Activated CD8-positive, alpha-beta T cell treated with anti-CD3 and anti-CD28 coated beads, Interleukin-2, amount 10 ng/mL, durations not matched to agents 7 days and 5 days (primary cell): ENCODE measurements at regions of chr2 and their contacts with region 1.

Region 1: GRCh38 chr2:113390124-113390849 is 47.2 kb upstream of the ZNG1B start:
- DNase-seq: peak; percentile 73
- ATAC-seq: peak; percentile 90
- H3K4me3 Mint-ChIP-seq: peak overlapping the region; percentile 74
- H3K27ac Mint-ChIP-seq: peak overlapping the region; percentile 82
- H3K4me1 Mint-ChIP-seq: peaks cover 15% of the 10 kb centered on the region
- H3K27me3 Mint-ChIP-seq: peaks cover 20% of the 10 kb centered on the region

Region 2: GRCh38 chr2:113219889-113220641 is 170.2 kb before region 1 on chr2:
- CTCF ChIA-PET with region 1: interaction called, 11 read pairs
- POLR2A ChIA-PET with region 1: interaction called, 3 read pairs
- DNase-seq: no peak
- ATAC-seq: no peak
- H3K4me3 Mint-ChIP-seq: no peak overlapping the region
- H3K27ac Mint-ChIP-seq: no peak overlapping the region
- H3K4me1 Mint-ChIP-seq: peaks cover 33% of the 10 kb centered on the region
- H3K27me3 Mint-ChIP-seq: peaks cover 5% of the 10 kb centered on the region

Region 3: GRCh38 chr2:113284481-113284880 is 105.8 kb before region 1 on chr2:
- CTCF ChIA-PET with region 1: no interaction called
- POLR2A ChIA-PET with region 1: no interaction called
- DNase-seq: no peak
- ATAC-seq: no peak
- H3K4me3 Mint-ChIP-seq: no peak overlapping the region
- H3K27ac Mint-ChIP-seq: no peak overlapping the region
- H3K4me1 Mint-ChIP-seq: no peaks in the 10 kb centered on the region
- H3K27me3 Mint-ChIP-seq: peaks cover 38% of the 10 kb centered on the region

Region 4: DNA sequence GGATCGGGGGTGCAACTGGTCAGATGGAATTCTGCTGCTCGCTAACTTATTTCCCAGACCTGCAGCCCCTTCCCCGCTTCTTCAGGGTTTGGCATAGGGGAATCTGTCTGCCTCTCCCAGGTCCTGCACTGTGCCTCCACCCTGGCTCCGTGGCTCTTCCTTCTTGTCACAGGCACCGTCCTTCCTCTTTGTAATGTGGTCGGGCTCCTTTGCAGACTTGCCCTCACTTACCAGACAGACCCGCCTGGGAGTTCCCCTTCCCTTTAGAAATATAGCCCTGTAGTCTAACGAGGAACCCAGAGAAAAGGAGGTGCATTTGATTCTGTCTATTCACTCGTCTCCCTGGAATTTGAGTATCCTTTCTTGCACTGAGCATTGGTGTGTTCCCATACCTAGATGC is 47.6 kb before region 1 on chr2:
- CTCF ChIA-PET with region 1: no interaction called
- POLR2A ChIA-PET with region 1: no interaction called
- DNase-seq: peak; percentile 42
- ATAC-seq: peak; percentile 75
- H3K4me3 Mint-ChIP-seq: no peak overlapping the region
- H3K27ac Mint-ChIP-seq: no peak overlapping the region
- H3K4me1 Mint-ChIP-seq: peaks cover 10% of the 10 kb centered on the region
- H3K27me3 Mint-ChIP-seq: peaks cover 28% of the 10 kb centered on the region

Region 5: DNA sequence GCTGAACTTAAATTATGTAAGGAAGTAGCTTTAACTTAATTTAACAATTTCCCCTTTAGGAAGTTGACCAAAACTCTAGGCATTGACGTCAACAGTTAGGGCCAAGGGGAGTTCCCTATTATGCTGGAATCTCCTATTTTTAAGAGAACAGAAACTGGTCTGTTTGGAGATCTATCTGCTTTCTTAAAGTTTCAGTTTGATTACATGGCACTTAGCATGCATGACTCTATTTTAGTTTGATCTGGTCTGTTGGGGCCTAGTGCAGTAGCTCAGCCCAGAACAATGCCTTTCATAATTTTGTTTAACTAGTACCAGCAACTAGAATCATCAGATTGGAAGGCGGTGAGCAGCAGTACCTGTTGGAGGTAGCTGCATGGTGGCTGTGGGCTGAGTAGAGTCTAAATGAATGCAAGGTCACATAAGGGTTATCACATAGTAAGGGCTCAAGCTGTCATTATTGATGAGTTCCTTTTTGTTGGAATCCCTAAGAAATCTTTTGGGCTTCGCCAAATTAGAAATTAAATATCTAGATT is 13.3 kb before region 1 on chr2:
- CTCF ChIA-PET with region 1: interaction called, 13 read pairs
- POLR2A ChIA-PET with region 1: no interaction called
- DNase-seq: no peak
- ATAC-seq: no peak
- H3K4me3 Mint-ChIP-seq: no peak overlapping the region
- H3K27ac Mint-ChIP-seq: no peak overlapping the region
- H3K4me1 Mint-ChIP-seq: peaks cover 17% of the 10 kb centered on the region
- H3K27me3 Mint-ChIP-seq: peaks cover 20% of the 10 kb centered on the region